H1 (cell line): ENCODE measurements at regions of chr6 and their contacts with region 1.

Region 1: DNA sequence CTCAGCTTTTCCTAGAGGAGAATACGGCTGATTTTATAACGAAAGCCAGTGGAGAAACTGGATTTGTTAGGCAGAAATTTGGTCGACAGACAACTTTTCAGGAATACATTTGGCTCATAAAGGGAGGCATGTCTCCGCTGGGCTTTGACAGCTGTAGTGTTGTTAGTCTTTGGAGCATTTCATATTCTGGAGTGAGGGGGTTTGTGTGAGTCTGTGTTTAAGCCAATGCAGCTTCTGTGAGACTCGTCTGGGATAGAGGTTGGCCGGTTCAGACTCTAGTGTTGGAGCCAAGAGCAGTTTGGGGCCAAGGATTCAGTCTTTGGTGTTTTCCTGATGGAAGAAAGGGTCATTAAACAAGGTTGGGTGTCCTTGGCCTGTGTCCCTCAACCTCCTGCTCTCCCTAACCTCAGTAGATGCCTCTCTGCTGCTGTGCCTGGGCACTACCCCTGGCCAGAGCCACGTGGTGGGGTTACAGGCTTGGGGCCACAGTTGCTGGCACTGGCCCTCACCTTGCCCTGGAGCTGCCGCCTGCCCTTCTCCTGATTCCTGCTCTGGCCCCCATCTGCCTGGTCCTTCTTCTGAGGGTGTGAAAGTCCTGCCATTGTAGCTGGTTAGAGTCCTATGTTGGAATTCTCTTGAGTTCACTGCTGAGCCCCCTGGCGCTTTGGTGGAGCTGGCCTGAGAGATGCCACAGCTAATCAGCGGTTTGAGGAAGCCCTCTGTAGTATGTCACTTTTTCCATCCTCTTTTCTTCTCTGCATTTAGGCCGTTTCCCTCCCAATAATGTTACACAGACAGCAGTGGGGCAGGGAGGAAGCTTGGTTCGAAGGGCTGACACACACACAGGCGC is 6.9 kb downstream of the PTK7 start:
- DNase-seq: no peak
- H3K4me3 ChIP-seq: no peak overlapping the region
- H3K27ac ChIP-seq: no peak overlapping the region
- H3K4me1 ChIP-seq: peaks cover 3 to 14% (median 6%) of the 10 kb centered on the region in 4 experiments; a peak in 6 of 7 replicates
- H3K27me3 ChIP-seq: no peaks in the 10 kb centered on the region
- CTCF ChIP-seq: no peak
- EP300 ChIP-seq: no peak
- POLR2A ChIP-seq: no peak
- RAD21 ChIP-seq: no peak

Region 2: DNA sequence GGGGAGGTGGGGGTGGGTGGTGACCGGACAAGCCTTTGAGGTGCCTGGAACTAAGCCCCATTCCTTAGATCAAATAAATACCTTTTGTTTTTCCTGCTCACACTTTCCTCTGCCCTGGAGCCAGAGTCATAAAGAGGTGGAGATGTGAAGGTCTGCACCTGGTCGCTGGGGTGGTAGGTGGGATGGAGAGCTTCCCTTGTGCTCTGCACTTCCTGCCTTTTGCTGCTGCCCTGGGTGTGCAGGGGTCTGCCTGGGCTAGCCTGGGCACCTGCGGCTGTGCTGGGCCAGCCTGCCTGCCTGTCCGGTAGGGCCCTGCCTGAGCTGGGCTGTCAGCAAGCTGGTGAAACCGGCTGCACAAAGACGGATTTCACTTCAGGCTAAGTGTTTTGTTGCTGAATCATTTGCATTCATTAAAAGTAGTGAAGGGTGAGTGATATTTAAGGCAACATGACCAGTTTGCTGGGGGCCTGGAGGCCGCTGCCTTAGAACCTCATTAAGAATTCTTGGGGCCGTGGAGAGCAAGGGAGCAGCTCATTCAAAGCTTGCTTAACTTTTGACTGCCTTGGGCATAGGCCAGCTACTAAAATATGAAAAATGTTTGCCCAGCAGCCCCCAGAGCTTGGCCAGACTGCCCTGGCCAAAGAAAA is 13.5 kb after region 1 on chr6:
- CTCF ChIA-PET with region 1: interaction called, 17 read pairs
- POLR2A ChIA-PET with region 1: interaction called, 28 read pairs
- DNase-seq: no peak
- H3K4me3 ChIP-seq: no peak overlapping the region
- H3K27ac ChIP-seq: peak overlapping the region; percentile 40; the same call in 1 of the 2 replicates
- H3K4me1 ChIP-seq: peaks cover 10 to 23% (median 14%) of the 10 kb centered on the region in 4 experiments; a peak in 6 of 7 replicates
- H3K27me3 ChIP-seq: no peaks in the 10 kb centered on the region
- CTCF ChIP-seq: no peak
- EP300 ChIP-seq: no peak
- POLR2A ChIP-seq: no peak
- RAD21 ChIP-seq: no peak

Region 3: GRCh38 chr6:43120944-43121913 is 38.2 kb after region 1 on chr6:
- CTCF ChIA-PET with region 1: interaction called, 29 read pairs
- POLR2A ChIA-PET with region 1: interaction called, 11 read pairs
- DNase-seq: no peak
- H3K4me3 ChIP-seq: no peak overlapping the region
- H3K27ac ChIP-seq: no peak overlapping the region
- H3K4me1 ChIP-seq: peaks cover 2 to 17% (median 9%) of the 10 kb centered on the region in 4 experiments
- H3K27me3 ChIP-seq: no peaks in the 10 kb centered on the region
- CTCF ChIP-seq: no peak
- EP300 ChIP-seq: no peak
- POLR2A ChIP-seq: no peak
- RAD21 ChIP-seq: peak in 1 of 2 experiments; percentile 11; a peak in 1 of 4 replicates